ENCODE measurements at regions of chr6 and their contacts with region 1.

Region 1: DNA sequence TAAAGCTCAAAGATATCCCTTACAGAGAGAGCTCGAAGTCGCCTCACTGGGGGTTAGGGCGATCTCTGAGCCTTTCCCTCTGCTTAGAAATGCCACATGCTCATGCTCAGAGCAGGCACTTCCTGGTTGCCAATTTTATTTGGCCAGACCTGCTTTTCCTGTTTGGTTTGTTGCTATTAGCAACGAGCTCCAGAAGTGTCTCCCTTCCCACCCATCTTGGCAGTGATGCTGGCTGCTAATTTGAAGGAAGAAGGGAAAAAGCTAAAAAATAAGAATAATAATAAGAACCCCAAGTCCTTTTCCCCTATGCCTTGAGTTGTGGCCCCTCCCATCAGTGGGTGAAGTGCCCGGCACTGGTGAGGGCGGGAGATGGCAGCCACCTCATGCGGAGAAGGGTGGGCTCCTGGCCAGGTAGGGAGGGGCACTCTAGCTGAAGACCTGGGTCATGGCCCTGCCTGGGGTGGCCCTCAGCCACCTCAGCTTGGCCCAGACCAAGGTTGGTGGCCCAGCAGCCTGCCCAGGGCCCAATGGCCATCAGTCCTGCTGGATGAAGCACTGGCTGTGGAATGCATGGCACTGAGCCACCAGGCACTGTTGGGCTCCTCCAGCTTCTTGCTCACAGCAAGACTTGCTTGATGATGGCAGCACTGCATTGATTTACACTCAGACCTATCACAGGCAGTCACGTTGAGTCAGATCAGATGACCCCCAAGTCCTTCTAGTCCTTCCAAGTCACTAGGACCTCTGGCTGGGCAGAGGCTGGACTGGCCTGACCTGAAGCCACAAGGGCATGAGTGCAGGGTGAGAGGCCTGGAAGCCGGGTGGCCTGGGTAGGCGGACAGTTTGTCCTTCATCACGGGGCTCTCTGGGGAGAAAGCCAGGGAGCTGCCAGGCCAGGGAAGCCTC is 79.0 kb downstream of the SYNJ2 start:
- DNase-seq: no peak
- ATAC-seq: no peak
- H3K4me3 Mint-ChIP-seq: no peak overlapping the region
- H3K27ac Mint-ChIP-seq: no peak overlapping the region
- H3K4me1 Mint-ChIP-seq: peaks cover 26% of the 10 kb centered on the region
- H3K27me3 Mint-ChIP-seq: no peaks in the 10 kb centered on the region
- CTCF ChIP-seq: no peak

Region 2: GRCh38 chr6:157912326-157912725 is 148.4 kb before region 1 on chr6:
- CTCF ChIA-PET with region 1: no interaction called
- POLR2A ChIA-PET with region 1: no interaction called
- intact Hi-C with region 1: loop called (anchors 10 kb)
- DNase-seq: no peak
- ATAC-seq: no peak
- H3K4me3 Mint-ChIP-seq: no peak overlapping the region
- H3K27ac Mint-ChIP-seq: no peak overlapping the region
- H3K4me1 Mint-ChIP-seq: peaks cover 22% of the 10 kb centered on the region
- H3K27me3 Mint-ChIP-seq: no peaks in the 10 kb centered on the region
- CTCF ChIP-seq: no peak

Region 3: GRCh38 chr6:157946865-157947532 is 113.7 kb before region 1 on chr6:
- CTCF ChIA-PET with region 1: no interaction called
- POLR2A ChIA-PET with region 1: no interaction called
- intact Hi-C with region 1: no loop called
- DNase-seq: peak; percentile 36
- ATAC-seq: peak; percentile 66
- H3K4me3 Mint-ChIP-seq: no peak overlapping the region
- H3K27ac Mint-ChIP-seq: peak overlapping the region; percentile 62
- H3K4me1 Mint-ChIP-seq: peaks cover 32% of the 10 kb centered on the region
- H3K27me3 Mint-ChIP-seq: no peaks in the 10 kb centered on the region
- CTCF ChIP-seq: peak; percentile 66

Region 4: DNA sequence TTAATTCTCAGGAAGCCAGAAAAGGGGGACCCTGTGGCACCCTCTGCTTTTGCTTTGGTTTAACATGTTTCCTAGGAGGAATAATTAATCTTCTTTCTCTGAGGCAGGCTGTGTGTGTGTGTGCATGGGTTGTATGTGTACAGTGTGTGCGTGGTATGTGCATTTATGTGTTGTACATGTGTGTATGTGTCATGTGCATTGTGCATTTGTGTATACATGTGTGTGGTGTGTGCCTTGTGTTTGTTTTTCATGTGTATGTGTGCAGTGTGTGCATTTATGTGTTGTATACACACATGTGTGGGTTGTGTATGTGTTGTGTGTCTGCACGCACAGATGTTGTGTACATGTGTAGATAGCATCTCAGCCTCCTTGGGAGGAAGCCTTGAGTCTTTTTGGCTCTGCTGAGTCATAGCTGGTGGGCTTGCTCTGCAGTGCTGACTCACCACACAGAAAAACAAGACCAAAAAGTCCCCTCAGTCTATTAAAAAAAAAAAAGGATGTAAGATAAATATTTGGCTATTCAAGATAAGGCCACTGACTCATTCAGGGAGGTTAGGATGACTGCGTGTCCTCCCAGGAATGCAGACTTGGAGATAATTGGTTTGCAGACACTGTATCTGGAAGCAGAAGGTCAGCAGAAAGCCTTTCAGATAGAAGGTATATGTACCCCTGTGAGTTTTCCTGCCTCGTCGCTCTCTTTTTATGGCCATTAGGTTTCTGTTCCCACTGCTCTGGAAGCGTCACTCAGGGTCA is 20.5 kb before region 1 on chr6:
- CTCF ChIA-PET with region 1: no interaction called
- POLR2A ChIA-PET with region 1: no interaction called
- intact Hi-C with region 1: no loop called
- DNase-seq: peak; percentile 60
- ATAC-seq: peak; percentile 77
- H3K4me3 Mint-ChIP-seq: no peak overlapping the region
- H3K27ac Mint-ChIP-seq: peak overlapping the region; percentile 56
- H3K4me1 Mint-ChIP-seq: peaks cover 27% of the 10 kb centered on the region
- H3K27me3 Mint-ChIP-seq: no peaks in the 10 kb centered on the region
- CTCF ChIP-seq: no peak